GM23248 (cell line): ENCODE measurements at regions of chr6 and their contacts with region 1.

Region 1: GRCh38 chr6:42547407-42548329 is 16.2 kb upstream of the UBR2 start:
- DNase-seq: peak; percentile 90
- H3K4me3 ChIP-seq: peak overlapping the region; percentile 83
- H3K27ac ChIP-seq: peak overlapping the region; percentile 52
- H3K4me1 ChIP-seq: 0 out of 2 replicates have a peak, but pooled peaks cover 3% of the 10 kb centered on the region
- H3K27me3 ChIP-seq: no peaks in the 10 kb centered on the region

Region 2: DNA sequence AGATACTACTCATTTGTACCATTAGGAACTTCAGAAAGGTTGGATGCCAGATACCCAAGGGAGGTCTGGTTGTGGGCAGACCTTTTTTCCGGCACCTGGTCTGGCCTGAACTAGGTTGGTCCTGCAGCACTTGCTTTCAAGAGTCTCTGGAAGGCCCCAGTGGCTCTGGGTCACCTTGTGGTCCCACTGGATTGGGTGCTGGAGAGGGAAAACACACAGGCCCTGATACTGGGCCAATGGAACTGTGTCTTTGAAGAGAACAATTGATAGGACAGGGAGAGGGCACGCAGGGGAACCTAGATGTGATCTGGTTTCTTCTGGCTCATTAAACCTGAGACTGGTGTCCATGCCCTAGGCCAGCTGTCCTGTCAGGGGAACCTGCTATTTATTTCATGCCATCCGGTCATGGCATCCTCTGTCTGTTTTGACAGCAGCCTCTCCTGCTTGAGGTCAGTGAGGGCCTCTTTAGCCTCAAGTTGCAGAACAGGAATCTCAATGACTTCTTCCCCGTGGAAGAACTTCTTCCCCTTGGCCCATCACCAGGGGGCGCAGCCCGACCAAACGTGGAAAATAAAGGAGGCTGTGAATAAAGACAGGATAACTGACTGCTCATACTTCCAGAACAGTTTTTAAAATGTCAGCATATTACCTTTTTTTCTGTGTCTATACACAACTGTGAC is 472.4 kb before region 1 on chr6:
- in situ Hi-C with region 1: loop called (anchors 10 kb)
- DNase-seq: peak; percentile 78
- H3K4me3 ChIP-seq: no peak overlapping the region
- H3K27ac ChIP-seq: no peak overlapping the region
- H3K4me1 ChIP-seq: no peaks in the 10 kb centered on the region
- H3K27me3 ChIP-seq: no peaks in the 10 kb centered on the region

Region 3: GRCh38 chr6:42260972-42261371 is 286.7 kb before region 1 on chr6:
- in situ Hi-C with region 1: loop called (anchors 25 kb)
- DNase-seq: peak; percentile 20
- H3K4me3 ChIP-seq: no peak overlapping the region
- H3K27ac ChIP-seq: no peak overlapping the region
- H3K4me1 ChIP-seq: no peaks in the 10 kb centered on the region
- H3K27me3 ChIP-seq: no peaks in the 10 kb centered on the region